Heart right ventricle (tissue), 16 donors: ENCODE measurements at regions of chr15 and their contacts with region 1.

Region 1: DNA sequence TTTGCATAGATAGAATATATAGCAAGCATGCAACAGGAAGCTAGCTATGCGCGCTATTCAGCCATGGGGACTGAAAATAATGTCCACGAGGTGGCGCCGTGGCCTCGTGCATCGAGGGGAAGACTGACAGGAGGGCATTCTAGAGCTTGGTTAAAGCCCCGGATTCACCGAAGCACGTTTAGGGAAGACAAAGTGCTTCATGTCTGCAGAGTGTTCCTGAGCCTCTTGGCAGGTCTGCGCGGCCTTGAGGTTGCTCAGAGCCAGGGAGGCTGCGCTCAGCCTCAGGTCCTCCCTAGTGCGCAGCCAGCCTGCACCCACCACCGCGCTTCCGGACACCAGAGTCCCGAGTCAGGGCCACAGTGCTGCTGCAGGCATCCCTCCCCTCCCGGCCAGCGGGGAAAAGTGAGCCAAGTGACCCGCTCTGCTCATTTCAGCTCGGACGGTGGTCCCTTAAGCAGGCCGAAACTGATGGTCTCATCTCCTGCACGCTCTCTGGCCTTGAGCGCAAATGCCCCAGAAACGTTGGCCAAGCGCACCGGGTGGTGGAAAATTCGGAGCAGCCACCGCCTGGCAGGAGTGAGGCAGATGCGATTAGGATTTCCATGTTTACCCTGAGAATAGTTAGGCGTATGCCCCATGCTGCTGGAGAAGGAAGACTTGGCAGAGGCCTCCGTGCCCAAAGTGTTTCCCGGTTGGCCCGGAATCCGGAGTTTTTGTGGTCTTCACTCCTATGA is 24.8 kb downstream of the GABRA5 start:
- DNase-seq: peak; percentile 44 to 50
- ATAC-seq: peak in 7 of 8 donors; percentile 47 to 87 (median 68)
- H3K4me3 ChIP-seq: peak overlapping the region in 8 of 10 donors; percentile 21 to 44 (median 30)
- H3K27ac ChIP-seq: no peak overlapping the region
- H3K4me1 ChIP-seq: peaks cover 0 to 12% (median 10%) of the 10 kb centered on the region in 9 donors
- H3K27me3 ChIP-seq: peaks cover 0 to 45% (median 29%) of the 10 kb centered on the region in 7 donors
- CTCF ChIP-seq: peak in 8 of 9 donors; percentile 51 to 73 (median 60)

Region 2: DNA sequence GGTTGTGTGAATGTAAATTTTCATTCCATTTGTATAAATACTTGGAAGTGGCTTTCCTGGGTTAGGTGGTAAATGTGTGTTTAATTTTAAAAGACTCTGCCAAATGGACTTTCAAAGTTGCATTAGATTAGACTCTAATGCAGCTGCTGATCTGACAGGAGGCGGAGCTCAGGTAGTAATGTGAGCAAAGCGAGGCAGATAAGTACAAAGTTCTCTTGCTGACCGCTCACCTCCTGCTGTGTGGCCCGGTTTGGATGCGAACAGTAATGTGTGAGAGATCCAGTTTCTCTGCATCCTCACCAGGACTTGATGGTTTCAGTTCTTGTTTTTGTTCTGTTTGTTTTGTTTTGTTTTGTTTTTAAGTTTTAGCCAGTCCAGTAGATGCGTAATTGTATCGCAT is 59.7 kb before region 1 on chr15:
- intact Hi-C with region 1: no loop called
- DNase-seq: no peak
- ATAC-seq: no peak
- H3K4me3 ChIP-seq: no peak overlapping the region
- H3K27ac ChIP-seq: no peak overlapping the region
- H3K4me1 ChIP-seq: no peaks in the 10 kb centered on the region
- H3K27me3 ChIP-seq: no peaks in the 10 kb centered on the region
- CTCF ChIP-seq: no peak

Region 3: GRCh38 chr15:27017168-27017809 is 125.7 kb after region 1 on chr15:
- intact Hi-C with region 1: loop called in 3 of 10 experiments (anchors 5 to 10 kb)
- DNase-seq: no peak
- ATAC-seq: peak in 1 of 8 donors; percentile 44
- H3K4me3 ChIP-seq: no peak overlapping the region
- H3K27ac ChIP-seq: no peak overlapping the region
- H3K4me1 ChIP-seq: no peaks in the 10 kb centered on the region
- H3K27me3 ChIP-seq: peaks cover 0 to 9% (median under 1%) of the 10 kb centered on the region in 7 donors
- CTCF ChIP-seq: peak in 8 of 9 donors; percentile 11 to 77 (median 39)

Region 4: GRCh38 chr15:27028858-27029477 is 137.4 kb after region 1 on chr15:
- intact Hi-C with region 1: loop called in 1 of 10 experiments (anchors 10 kb)
- DNase-seq: no peak
- ATAC-seq: no peak
- H3K4me3 ChIP-seq: no peak overlapping the region
- H3K27ac ChIP-seq: no peak overlapping the region
- H3K4me1 ChIP-seq: no peaks in the 10 kb centered on the region
- H3K27me3 ChIP-seq: peaks cover 0 to 19% (median 5%) of the 10 kb centered on the region in 7 donors
- CTCF ChIP-seq: no peak

Region 5: DNA sequence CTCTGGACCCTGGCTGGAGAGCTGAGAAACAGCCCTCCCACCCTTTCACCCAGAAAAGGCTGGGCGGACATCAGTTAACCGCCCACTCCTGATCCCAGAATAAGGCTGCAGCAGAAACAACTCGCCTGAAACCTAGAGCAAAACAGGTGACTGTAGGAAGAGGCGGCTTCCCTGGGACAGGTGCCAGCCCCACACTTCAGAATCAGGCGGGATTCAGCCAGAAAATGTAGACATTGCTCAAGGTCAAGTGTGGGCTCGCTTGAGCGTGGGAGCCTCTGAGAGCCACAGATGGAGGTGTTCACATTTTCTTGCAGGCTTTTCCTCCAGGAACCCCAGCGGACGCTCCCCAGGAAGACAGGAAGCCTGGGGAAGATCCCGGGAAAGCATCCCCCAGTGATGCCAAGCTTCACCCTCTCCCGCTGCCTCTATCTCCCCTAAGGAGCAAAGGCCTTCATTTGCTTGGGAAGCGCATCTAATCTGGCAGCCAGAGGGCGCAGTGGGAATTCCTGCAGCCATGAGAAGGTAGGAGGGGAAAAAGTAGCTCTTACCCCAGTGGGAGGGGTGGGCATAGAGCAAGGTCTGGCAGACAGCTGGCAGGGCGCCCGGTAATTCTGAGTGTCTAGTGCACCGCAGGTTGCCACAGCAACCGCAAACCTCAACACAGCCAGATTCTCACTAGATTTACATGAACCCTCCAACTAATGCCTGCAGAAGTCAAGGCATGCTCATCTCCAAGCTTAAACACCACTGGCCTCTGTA is 1129.8 kb after region 1 on chr15:
- intact Hi-C with region 1: loop called in 1 of 10 experiments (anchors 10 kb)
- DNase-seq: peak in 1 of 2 donors; percentile 34
- ATAC-seq: peak in 7 of 8 donors; percentile 13 to 68 (median 50)
- H3K4me3 ChIP-seq: no peak overlapping the region
- H3K27ac ChIP-seq: no peak overlapping the region
- H3K4me1 ChIP-seq: no peaks in the 10 kb centered on the region
- H3K27me3 ChIP-seq: no peaks in the 10 kb centered on the region
- CTCF ChIP-seq: peak; percentile 27 to 64 (median 52)

Region 6: DNA sequence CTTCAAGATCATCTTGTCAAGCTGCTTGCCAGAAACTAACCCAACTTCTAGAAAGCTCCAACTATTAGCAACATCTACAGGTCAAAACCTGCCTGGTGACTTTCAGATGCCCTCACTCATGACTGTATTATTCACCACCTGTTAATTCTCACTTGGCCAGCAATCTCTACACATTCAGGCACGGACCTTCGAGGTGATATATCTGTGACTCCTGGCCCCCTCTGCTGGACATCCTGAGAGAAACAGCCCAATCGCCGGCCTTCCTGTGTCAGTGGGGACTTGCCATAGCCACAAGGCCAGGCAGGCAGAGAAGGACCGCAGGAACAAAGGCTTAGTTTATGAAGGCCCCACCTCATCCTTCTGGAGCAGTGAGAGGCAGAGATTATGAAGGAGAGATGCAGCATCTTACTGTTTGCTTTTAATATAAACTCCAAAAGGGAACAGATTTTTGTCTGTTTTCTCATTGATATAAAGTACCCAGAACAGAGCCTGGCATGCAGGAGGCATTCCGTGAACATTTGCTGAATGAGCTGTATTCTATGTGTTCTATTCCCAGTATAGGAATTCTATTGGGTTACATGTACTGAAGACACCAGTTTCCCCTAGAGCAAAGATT is 1231.9 kb after region 1 on chr15:
- intact Hi-C with region 1: loop called in 2 of 10 experiments (anchors 5 to 10 kb)
- DNase-seq: peak; percentile 44 to 51
- ATAC-seq: peak in 7 of 8 donors; percentile 29 to 61 (median 55)
- H3K4me3 ChIP-seq: no peak overlapping the region
- H3K27ac ChIP-seq: no peak overlapping the region
- H3K4me1 ChIP-seq: peaks cover 0 to 11% (median 4%) of the 10 kb centered on the region in 9 donors
- H3K27me3 ChIP-seq: no peaks in the 10 kb centered on the region
- CTCF ChIP-seq: peak; percentile 24 to 73 (median 68)